HepG2 (cell line): ENCODE measurements at regions of chr1 and their contacts with region 1.

Region 1: GRCh38 chr1:94012686-94013624 is 103.7 kb upstream of the GCLM start:
- DNase-seq: no peak
- ATAC-seq: peak; percentile 66
- H3K4me3 ChIP-seq: 0 out of 6 replicates have a peak overlapping the region, but pooled peaks of 1 of the 3 experiments have one; percentile 12
- H3K27ac ChIP-seq: no peak overlapping the region
- H3K4me1 ChIP-seq: peaks cover 35% of the 10 kb centered on the region
- H3K27me3 ChIP-seq: peaks cover 2 to 12% of the 10 kb centered on the region in 2 experiments; a peak in 2 of 5 replicates
- CTCF ChIP-seq: no peak
- EP300 ChIP-seq: no peak
- POLR2A ChIP-seq: no peak
- RAD21 ChIP-seq: no peak

Region 2: DNA sequence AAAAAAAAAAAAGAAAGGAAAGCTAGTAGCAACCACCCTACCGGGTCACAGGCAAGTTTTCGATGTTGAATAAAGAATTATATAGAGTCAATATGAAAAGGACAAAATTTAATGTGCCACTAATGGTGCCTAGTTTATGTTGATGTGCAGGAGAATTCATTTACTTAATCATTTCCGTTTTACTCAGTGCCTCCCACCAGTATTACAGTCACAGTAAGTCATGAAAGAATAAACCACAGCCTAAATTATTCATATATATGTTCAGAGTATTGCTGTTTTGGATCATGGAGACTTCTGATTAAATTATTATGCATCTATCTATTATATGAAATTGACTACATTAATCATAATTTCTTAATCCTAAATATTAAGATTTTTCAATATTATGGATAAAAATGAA is 529.8 kb before region 1 on chr1:
- CTCF ChIA-PET with region 1: no interaction called
- POLR2A ChIA-PET with region 1: no interaction called
- in situ Hi-C with region 1: no loop called
- intact Hi-C with region 1: no loop called
- DNase-seq: no peak
- ATAC-seq: no peak
- H3K4me3 ChIP-seq: no peak overlapping the region
- H3K27ac ChIP-seq: no peak overlapping the region
- H3K4me1 ChIP-seq: peaks cover 30% of the 10 kb centered on the region
- H3K27me3 ChIP-seq: no peaks in the 10 kb centered on the region
- CTCF ChIP-seq: no peak
- EP300 ChIP-seq: no peak
- POLR2A ChIP-seq: no peak
- RAD21 ChIP-seq: no peak

Region 3: GRCh38 chr1:94572780-94573179 is 559.8 kb after region 1 on chr1:
- CTCF ChIA-PET with region 1: no interaction called
- POLR2A ChIA-PET with region 1: no interaction called
- in situ Hi-C with region 1: no loop called
- intact Hi-C with region 1: loop called (anchors 5 kb)
- DNase-seq: no peak
- ATAC-seq: no peak
- H3K4me3 ChIP-seq: no peak overlapping the region
- H3K27ac ChIP-seq: no peak overlapping the region
- H3K4me1 ChIP-seq: no peaks in the 10 kb centered on the region
- H3K27me3 ChIP-seq: no peaks in the 10 kb centered on the region
- CTCF ChIP-seq: no peak
- EP300 ChIP-seq: no peak
- POLR2A ChIP-seq: no peak
- RAD21 ChIP-seq: no peak

Region 4: GRCh38 chr1:94719926-94720793 is 707.2 kb after region 1 on chr1:
- CTCF ChIA-PET with region 1: no interaction called
- POLR2A ChIA-PET with region 1: no interaction called
- in situ Hi-C with region 1: no loop called
- intact Hi-C with region 1: no loop called
- DNase-seq: no peak
- ATAC-seq: no peak
- H3K4me3 ChIP-seq: no peak overlapping the region
- H3K27ac ChIP-seq: no peak overlapping the region
- H3K4me1 ChIP-seq: peaks cover 8% of the 10 kb centered on the region; the same call in 1 of the 2 replicates
- H3K27me3 ChIP-seq: no peaks in the 10 kb centered on the region
- CTCF ChIP-seq: no peak
- EP300 ChIP-seq: no peak
- POLR2A ChIP-seq: no peak
- RAD21 ChIP-seq: no peak